Activated CD4-positive, alpha-beta T cell treated with anti-CD3 and anti-CD28 coated beads, Interleukin-2, amount 10 ng/mL, durations not matched to agents 24 days and 14 days (primary cell): ENCODE measurements at regions of chr6 and their contacts with region 1.

Region 1: DNA sequence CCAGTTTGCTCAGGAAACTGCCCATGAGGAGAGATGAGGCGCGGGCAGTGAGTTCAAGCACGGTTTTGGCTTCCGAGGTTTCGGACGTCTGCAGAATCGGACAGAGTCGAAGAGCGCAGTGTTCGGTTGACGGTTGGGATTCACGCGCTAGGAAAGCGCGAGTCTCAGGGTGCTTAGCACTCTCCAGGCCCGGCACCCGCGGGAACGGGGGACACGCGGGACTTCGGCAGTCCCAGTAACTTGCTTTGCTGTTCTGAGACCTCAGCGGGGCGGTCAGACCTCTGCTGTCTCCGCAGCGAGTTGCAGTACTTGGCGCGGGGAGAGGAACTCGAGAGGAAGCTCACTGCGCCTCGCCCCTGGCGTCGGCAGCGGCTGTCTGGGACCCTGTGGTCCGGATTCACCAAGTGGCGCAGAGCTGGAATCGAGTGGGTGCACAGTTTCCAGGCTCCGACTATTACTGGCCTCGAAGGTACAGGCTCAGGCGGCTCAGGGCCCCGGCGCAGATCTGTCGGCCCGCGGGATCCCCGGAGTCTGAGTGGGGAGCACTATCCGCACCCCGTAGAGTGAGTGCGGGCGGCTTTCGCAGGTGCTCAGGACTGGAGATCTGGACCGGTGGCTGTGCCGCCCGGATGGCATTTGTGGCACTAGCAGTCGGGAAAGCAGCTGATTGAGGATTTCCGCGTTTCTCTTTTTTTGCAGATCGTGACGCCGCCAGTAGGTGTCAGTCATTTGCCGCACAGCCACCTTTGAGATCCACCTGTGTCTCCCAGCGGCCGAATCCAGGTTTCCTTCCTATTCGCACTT is at the start of gene POM121L2:
- DNase-seq: peak; percentile 88
- H3K4me3 Mint-ChIP-seq: peak within 1 kb of the TSS; percentile 85
- H3K27ac Mint-ChIP-seq: peak within 1 kb of the TSS; percentile 9
- H3K4me1 Mint-ChIP-seq: peaks cover 8% of the 10 kb centered on the region
- H3K27me3 Mint-ChIP-seq: peaks cover 70% of the 10 kb centered on the region
- total RNA-seq, gene POM121L2: not detected in 2 replicates

Region 2: GRCh38 chr6:27295301-27296081 is 16.9 kb before region 1 on chr6:
- intact Hi-C with region 1: no loop called
- DNase-seq: no peak
- H3K4me3 Mint-ChIP-seq: no peak overlapping the region
- H3K27ac Mint-ChIP-seq: peak overlapping the region; percentile 36
- H3K4me1 Mint-ChIP-seq: peaks cover 1% of the 10 kb centered on the region
- H3K27me3 Mint-ChIP-seq: peaks cover 60% of the 10 kb centered on the region

Region 3: GRCh38 chr6:27332692-27333641 is 20.6 kb after region 1 on chr6:
- intact Hi-C with region 1: loop called (anchors 2 kb)
- DNase-seq: peak; percentile 70
- H3K4me3 Mint-ChIP-seq: peak overlapping the region; percentile 75
- H3K27ac Mint-ChIP-seq: peak overlapping the region; percentile 35
- H3K4me1 Mint-ChIP-seq: peaks cover 7% of the 10 kb centered on the region
- H3K27me3 Mint-ChIP-seq: peaks cover 13% of the 10 kb centered on the region